GM12878 (cell line): ENCODE measurements at regions of chr3 and their contacts with region 1.

Region 1: GRCh38 chr3:195133462-195133861 is 137.5 kb downstream of the XXYLT1 start:
- DNase-seq: no peak
- ATAC-seq: no peak
- H3K4me3 ChIP-seq: no peak overlapping the region
- H3K27ac ChIP-seq: peak overlapping the region; percentile 38; the same call in 1 of the 2 replicates
- H3K4me1 ChIP-seq: peaks cover 43% of the 10 kb centered on the region
- H3K27me3 ChIP-seq: no peaks in the 10 kb centered on the region
- CTCF ChIP-seq: no peak; a peak in 1 of 6 replicates
- EP300 ChIP-seq: no peak
- POLR2A ChIP-seq: peak; percentile 50; the same call in 1 of the 2 replicates
- RAD21 ChIP-seq: peak; percentile 44; the same call in 1 of the 2 replicates

Region 2: DNA sequence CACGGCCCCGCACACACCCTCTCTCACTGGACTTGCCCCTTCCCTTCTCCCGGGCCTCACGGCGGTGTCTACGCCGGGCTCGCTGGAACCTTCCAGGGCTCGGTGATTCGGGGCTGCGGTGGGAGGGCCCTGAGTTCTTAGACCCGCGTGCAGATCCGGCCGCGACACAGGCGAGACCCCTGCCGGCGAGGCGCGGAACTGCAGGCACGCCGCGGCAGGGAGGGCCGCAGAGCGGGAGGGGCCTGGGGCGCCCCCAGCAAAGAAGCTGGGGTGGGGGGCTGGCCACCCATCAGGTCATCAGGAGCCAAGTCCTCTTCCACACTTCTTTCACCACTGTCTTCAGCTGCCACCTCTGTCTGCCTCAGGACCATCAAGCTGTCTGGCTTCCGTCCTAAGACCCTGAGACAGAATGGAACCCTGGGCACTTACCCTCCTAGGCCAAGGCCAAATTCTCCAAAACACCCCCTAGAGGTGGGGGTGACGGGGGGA is 27.0 kb before region 1 on chr3:
- CTCF ChIA-PET with region 1: interaction called, 9 read pairs
- POLR2A ChIA-PET with region 1: interaction called, 3 read pairs
- RAD21 ChIA-PET with region 1: interaction called, 13 read pairs
- SMC1A ChIA-PET with region 1: interaction called, 3 read pairs
- in situ Hi-C with region 1: no loop called
- intact Hi-C with region 1: no loop called
- DNase-seq: no peak
- ATAC-seq: peak; percentile 99
- H3K4me3 ChIP-seq: no peak overlapping the region
- H3K27ac ChIP-seq: no peak overlapping the region
- H3K4me1 ChIP-seq: no peaks in the 10 kb centered on the region; the same call in 1 of the 2 replicates
- H3K27me3 ChIP-seq: no peaks in the 10 kb centered on the region
- CTCF ChIP-seq: peak; percentile 92 to 99 (median 95)
- EP300 ChIP-seq: no peak
- POLR2A ChIP-seq: no peak
- RAD21 ChIP-seq: peak; percentile 93

Region 3: GRCh38 chr3:195147649-195148095 is 14.2 kb after region 1 on chr3:
- CTCF ChIA-PET with region 1: interaction called, 44 read pairs
- POLR2A ChIA-PET with region 1: interaction called, 136 read pairs
- RAD21 ChIA-PET with region 1: interaction called, 111 read pairs
- SMC1A ChIA-PET with region 1: interaction called, 178 read pairs
- in situ Hi-C with region 1: no loop called
- intact Hi-C with region 1: loop called (anchors 1 kb)
- DNase-seq: peak; percentile 91
- ATAC-seq: peak; percentile 83
- H3K4me3 ChIP-seq: peak overlapping the region; percentile 93
- H3K27ac ChIP-seq: peak overlapping the region; percentile 91
- H3K4me1 ChIP-seq: peaks cover 46% of the 10 kb centered on the region
- H3K27me3 ChIP-seq: no peaks in the 10 kb centered on the region
- CTCF ChIP-seq: no peak
- EP300 ChIP-seq: no peak
- POLR2A ChIP-seq: peak; percentile 79
- RAD21 ChIP-seq: no peak

Region 4: DNA sequence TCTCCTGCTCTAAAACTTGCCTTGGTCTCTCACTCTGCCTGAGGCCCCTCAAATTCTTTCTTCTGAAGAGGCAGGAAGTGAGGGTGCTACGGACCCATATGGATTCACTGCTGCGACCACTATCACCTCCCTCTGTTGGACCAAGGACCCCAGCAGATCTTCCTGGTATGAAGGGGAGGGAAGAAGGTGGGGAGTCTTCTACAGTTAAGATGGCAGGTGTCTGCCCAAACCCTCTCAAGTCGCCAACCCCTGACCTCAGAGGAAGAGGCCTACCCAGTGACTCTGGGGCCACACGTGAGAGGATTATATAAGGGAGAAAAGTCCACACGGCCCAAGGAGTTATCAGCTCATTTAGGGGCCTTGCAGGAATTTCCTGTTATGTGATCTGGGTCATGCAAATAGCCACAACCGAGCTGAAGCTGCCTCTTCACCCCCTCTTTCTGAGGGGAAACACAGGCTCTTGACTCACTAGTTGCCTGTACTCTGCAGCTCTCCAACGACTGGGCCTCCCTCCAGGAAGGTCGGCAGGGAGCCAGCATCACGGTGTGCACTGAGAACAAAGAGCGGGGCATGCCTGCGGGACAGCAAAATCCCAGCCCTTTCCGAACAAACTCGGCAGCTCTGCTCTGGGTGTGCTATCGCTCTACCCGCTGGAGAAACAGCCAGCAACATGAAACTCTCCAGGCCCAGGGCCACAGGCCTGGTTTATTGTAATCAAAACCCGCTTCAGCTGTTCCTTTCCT is 21.5 kb after region 1 on chr3:
- CTCF ChIA-PET with region 1: interaction called, 12 read pairs
- POLR2A ChIA-PET with region 1: interaction called, 62 read pairs
- RAD21 ChIA-PET with region 1: interaction called, 52 read pairs
- SMC1A ChIA-PET with region 1: interaction called, 88 read pairs
- in situ Hi-C with region 1: no loop called
- intact Hi-C with region 1: no loop called
- DNase-seq: no peak
- ATAC-seq: peak; percentile 7; the same call in 1 of the 3 replicates
- H3K4me3 ChIP-seq: 0 out of 2 replicates have a peak overlapping the region, but pooled peaks have one; percentile 12
- H3K27ac ChIP-seq: peak overlapping the region; percentile 73
- H3K4me1 ChIP-seq: peaks cover 44% of the 10 kb centered on the region
- H3K27me3 ChIP-seq: no peaks in the 10 kb centered on the region
- CTCF ChIP-seq: no peak
- EP300 ChIP-seq: no peak
- POLR2A ChIP-seq: peak; percentile 54
- RAD21 ChIP-seq: peak; percentile 8; the same call in 1 of the 2 replicates

Region 5: DNA sequence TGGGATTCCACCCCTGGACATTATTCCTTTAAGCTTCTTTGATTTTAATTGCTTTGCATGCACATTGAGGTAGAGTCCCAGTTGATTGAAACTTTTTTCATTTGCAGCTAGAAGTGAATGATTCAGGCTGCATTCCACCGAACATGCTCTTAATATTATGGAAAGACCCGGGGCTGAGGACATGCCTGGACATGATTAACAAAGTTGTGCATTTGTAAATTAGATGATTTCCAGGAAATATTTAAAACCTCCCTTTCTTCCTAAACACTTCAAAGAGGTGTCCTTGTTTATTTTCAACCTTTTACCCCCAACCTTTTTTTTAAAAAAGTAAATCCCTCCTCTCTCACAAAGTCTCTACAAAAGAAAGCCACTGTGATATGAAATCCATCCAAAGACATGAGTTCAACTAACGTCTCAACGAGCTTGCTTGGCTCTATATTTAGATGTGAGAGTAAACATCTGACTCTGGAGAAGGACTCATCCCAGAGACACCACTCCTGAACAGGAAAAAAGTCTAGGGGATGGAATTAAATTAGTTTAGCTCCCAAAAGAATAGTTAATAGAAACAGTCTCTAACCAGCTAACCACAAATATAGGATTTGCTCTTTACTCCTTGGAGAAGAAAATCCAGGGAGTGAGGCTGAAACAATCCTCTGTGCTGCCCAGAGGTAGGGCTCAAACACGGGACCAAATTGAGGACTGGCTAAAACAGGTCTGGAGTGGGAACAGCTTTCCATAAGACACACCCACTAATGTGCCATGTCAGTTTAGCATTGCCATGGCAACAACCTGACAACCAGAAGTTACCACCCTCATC is 54.4 kb after region 1 on chr3:
- CTCF ChIA-PET with region 1: interaction called, 7 read pairs
- POLR2A ChIA-PET with region 1: interaction called, 3 read pairs
- RAD21 ChIA-PET with region 1: interaction called, 9 read pairs
- SMC1A ChIA-PET with region 1: interaction called, 12 read pairs
- in situ Hi-C with region 1: no loop called
- intact Hi-C with region 1: no loop called
- DNase-seq: no peak
- ATAC-seq: no peak
- H3K4me3 ChIP-seq: no peak overlapping the region
- H3K27ac ChIP-seq: no peak overlapping the region
- H3K4me1 ChIP-seq: peaks cover 6% of the 10 kb centered on the region
- H3K27me3 ChIP-seq: no peaks in the 10 kb centered on the region
- CTCF ChIP-seq: no peak
- EP300 ChIP-seq: no peak
- POLR2A ChIP-seq: no peak
- RAD21 ChIP-seq: no peak

Region 6: DNA sequence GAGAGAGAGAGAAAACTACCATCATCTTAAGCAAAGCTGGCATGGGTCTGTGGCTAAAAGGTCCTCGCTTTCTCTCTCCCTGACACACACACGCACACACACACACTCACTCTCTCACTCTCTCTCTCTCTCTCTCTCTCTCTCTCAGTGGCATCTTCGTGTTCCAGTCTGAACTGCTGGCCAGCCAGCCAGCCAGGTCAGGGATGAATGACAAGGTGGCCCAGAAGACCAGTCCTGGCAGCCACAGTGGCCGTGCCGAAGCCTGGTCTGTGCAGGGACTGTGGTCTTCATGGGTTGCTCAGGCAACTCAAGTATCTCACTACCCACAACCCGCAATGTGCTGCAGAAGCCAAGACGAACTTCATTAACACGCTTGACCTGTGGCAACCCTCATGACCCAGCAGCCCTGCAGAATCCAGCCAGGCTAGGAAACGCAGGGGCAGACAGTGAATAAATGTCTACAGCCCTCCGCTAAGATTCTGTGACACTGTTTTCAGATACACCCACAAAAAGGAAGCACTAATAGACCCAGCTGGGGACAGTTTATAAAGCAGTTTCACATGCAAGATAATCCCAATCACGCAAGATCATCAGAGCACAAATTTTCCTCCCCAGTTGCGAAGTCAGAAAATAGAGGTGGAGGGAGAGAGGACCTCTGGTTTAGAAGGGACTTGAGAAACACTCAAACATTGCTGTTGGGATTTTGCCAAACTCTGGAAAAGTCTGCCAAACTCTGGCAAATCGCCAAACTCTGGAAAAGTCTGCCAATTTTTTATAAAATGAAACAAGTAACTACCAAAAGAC is 71.1 kb after region 1 on chr3:
- CTCF ChIA-PET with region 1: interaction called, 14 read pairs
- POLR2A ChIA-PET with region 1: interaction called, 28 read pairs
- RAD21 ChIA-PET with region 1: interaction called, 33 read pairs
- SMC1A ChIA-PET with region 1: interaction called, 62 read pairs
- in situ Hi-C with region 1: no loop called
- intact Hi-C with region 1: loop called (anchors 1 kb)
- DNase-seq: peak; percentile 38
- ATAC-seq: peak; percentile 66
- H3K4me3 ChIP-seq: no peak overlapping the region
- H3K27ac ChIP-seq: peak overlapping the region; percentile 15
- H3K4me1 ChIP-seq: peaks cover 43% of the 10 kb centered on the region
- H3K27me3 ChIP-seq: no peaks in the 10 kb centered on the region
- CTCF ChIP-seq: no peak
- EP300 ChIP-seq: no peak
- POLR2A ChIP-seq: no peak
- RAD21 ChIP-seq: no peak

Region 7: DNA sequence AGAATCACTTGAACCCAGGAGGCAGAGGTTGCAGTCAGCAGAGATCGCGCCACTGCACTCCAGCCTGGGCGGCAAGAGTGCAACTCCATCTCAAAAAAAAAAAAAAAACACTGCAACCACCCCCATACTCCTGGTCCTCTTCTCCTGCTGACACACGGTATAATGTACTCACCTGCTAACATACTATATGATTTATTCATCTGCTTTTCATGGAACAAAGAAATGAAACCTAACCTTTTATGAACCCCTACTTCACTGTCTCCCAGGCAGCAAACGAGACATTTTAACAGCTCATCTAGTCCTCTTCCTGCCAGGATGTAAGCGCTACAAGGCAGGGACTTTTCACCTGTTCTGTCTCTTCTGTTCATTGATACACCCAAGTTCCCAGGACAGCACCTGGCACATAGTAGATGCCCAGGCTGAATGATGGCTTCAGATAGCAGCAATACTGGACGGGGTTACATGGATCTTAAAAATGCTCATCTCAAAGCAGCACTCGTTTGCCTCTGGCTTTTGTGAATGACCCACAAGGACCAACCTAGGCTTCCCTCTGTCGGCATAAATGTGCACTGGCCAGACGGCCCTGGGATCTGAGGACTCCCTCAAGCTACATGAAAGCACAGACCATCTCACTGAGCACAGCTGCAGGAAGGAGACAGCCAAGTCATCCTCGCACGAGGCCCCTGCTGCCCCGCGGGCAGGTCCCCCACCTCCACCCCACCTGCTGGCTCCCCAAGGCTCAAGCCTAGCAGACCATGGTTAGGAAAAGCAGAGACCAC is 117.2 kb after region 1 on chr3:
- CTCF ChIA-PET with region 1: interaction called, 20 read pairs
- POLR2A ChIA-PET with region 1: interaction called, 43 read pairs
- RAD21 ChIA-PET with region 1: interaction called, 67 read pairs
- SMC1A ChIA-PET with region 1: interaction called, 70 read pairs
- in situ Hi-C with region 1: no loop called
- intact Hi-C with region 1: loop called (anchors 1 kb)
- DNase-seq: no peak
- ATAC-seq: peak; percentile 76
- H3K4me3 ChIP-seq: no peak overlapping the region
- H3K27ac ChIP-seq: peak overlapping the region; percentile 23
- H3K4me1 ChIP-seq: peaks cover 25% of the 10 kb centered on the region
- H3K27me3 ChIP-seq: no peaks in the 10 kb centered on the region
- CTCF ChIP-seq: peak; percentile 39 to 60 (median 42); a peak in 5 of 6 replicates
- EP300 ChIP-seq: no peak
- POLR2A ChIP-seq: no peak
- RAD21 ChIP-seq: peak; percentile 55